PC-9 (cell line): ENCODE measurements at regions of chr17 and their contacts with region 1.

Region 1: GRCh38 chr17:79796763-79797491 is at the start of gene CBX8:
- DNase-seq: peak; percentile 93 to 99
- H3K4me3 ChIP-seq: peak within 1 kb of the TSS; percentile 73
- H3K27ac ChIP-seq: 0 out of 2 replicates have a peak within 1 kb of the TSS, but pooled peaks have one; percentile 32
- H3K4me1 ChIP-seq: peaks cover 10% of the 10 kb centered on the region; the same call in 1 of the 2 replicates
- H3K27me3 ChIP-seq: peaks cover 15% of the 10 kb centered on the region; the same call in 1 of the 2 replicates
- CTCF ChIP-seq: no peak
- total RNA-seq, gene CBX8: 14.2 and 15.5 TPM in 2 replicates

Region 2: GRCh38 chr17:79769596-79770520 is 27.1 kb before region 1 on chr17:
- CTCF ChIA-PET with region 1: no interaction called
- POLR2A ChIA-PET with region 1: interaction called, 16 read pairs
- intact Hi-C with region 1: loop called (anchors 2 kb)
- DNase-seq: peak; percentile 80 to 83
- H3K4me3 ChIP-seq: peak overlapping the region; percentile 95
- H3K27ac ChIP-seq: peak overlapping the region; percentile 97
- H3K4me1 ChIP-seq: peaks cover 5% of the 10 kb centered on the region
- H3K27me3 ChIP-seq: no peaks in the 10 kb centered on the region
- CTCF ChIP-seq: no peak; the same call in 1 of the 2 replicates

Region 3: GRCh38 chr17:79810130-79811010 is 13.4 kb after region 1 on chr17:
- CTCF ChIA-PET with region 1: no interaction called
- POLR2A ChIA-PET with region 1: interaction called, 21 read pairs
- intact Hi-C with region 1: no loop called
- DNase-seq: peak; percentile 68 to 76
- H3K4me3 ChIP-seq: peak overlapping the region; percentile 54; the same call in 1 of the 2 replicates
- H3K27ac ChIP-seq: no peak overlapping the region
- H3K4me1 ChIP-seq: peaks cover 39% of the 10 kb centered on the region; the same call in 1 of the 2 replicates
- H3K27me3 ChIP-seq: peaks cover 3% of the 10 kb centered on the region; the same call in 1 of the 2 replicates
- CTCF ChIP-seq: no peak

Region 4: GRCh38 chr17:79839363-79840268 is 42.7 kb after region 1 on chr17 and contains the start of gene CBX4:
- CTCF ChIA-PET with region 1: interaction called, 5 read pairs
- POLR2A ChIA-PET with region 1: interaction called, 22 read pairs
- intact Hi-C with region 1: no loop called
- DNase-seq: peak; percentile 71 to 93
- H3K4me3 ChIP-seq: peak within 1 kb of the TSS; percentile 86
- H3K27ac ChIP-seq: peak within 1 kb of the TSS; percentile 83
- H3K4me1 ChIP-seq: peaks cover 15% of the 10 kb centered on the region
- H3K27me3 ChIP-seq: peaks cover 4% of the 10 kb centered on the region; the same call in 1 of the 2 replicates
- CTCF ChIP-seq: peak; percentile 83
- total RNA-seq, gene CBX4: 32.0 and 33.1 TPM in 2 replicates

Region 5: DNA sequence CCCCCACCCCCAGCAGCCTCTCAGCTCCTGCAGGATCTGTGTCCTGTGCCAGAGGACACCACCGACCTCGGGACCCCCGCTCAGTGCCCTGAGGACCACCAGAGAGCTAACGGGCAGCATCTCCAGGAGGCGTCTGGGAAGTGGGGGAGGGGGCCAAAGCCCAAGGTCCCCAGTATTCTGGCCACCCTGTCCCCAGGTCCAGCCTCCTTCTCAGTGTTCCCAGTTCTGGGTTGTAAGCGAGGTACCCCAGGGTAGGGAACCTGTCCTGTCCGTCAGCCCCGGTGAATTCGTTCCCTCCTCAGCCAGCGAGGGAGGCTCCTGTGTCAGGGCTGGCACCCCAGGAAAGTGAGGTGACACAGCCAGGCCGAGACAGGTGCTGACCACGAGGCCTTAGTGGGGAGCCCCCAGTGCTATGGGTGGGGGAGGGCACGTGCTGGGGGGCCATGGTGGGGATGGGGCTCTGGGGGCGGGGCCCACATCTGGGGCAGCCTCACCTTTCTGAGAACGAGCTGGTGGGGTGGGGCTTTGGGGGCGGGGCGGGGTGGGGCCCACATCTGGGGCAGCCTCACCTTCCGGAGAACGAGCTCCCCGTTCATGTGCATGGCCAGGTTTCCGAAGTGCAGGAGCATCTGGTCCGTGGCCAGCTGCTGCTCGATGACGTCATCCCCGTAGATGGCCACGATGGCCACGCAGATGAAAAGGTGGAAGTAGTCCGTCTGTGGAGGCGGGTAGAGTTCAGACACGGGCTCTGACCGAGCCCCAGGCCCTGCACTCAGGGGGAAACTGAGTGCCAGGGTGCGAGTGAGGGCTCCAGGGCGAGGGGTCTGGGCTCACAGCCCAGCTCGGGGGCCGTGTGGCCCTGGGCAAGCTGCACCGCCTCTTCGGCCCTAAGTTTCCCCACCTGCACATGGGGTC is 144.8 kb after region 1 on chr17:
- CTCF ChIA-PET with region 1: no interaction called
- POLR2A ChIA-PET with region 1: interaction called, 12 read pairs
- intact Hi-C with region 1: no loop called
- DNase-seq: no peak
- H3K4me3 ChIP-seq: no peak overlapping the region
- H3K27ac ChIP-seq: no peak overlapping the region
- H3K4me1 ChIP-seq: no peaks in the 10 kb centered on the region
- H3K27me3 ChIP-seq: no peaks in the 10 kb centered on the region
- CTCF ChIP-seq: no peak